ENCODE measurements at regions of chr9 and their contacts with region 1.

Region 1: DNA sequence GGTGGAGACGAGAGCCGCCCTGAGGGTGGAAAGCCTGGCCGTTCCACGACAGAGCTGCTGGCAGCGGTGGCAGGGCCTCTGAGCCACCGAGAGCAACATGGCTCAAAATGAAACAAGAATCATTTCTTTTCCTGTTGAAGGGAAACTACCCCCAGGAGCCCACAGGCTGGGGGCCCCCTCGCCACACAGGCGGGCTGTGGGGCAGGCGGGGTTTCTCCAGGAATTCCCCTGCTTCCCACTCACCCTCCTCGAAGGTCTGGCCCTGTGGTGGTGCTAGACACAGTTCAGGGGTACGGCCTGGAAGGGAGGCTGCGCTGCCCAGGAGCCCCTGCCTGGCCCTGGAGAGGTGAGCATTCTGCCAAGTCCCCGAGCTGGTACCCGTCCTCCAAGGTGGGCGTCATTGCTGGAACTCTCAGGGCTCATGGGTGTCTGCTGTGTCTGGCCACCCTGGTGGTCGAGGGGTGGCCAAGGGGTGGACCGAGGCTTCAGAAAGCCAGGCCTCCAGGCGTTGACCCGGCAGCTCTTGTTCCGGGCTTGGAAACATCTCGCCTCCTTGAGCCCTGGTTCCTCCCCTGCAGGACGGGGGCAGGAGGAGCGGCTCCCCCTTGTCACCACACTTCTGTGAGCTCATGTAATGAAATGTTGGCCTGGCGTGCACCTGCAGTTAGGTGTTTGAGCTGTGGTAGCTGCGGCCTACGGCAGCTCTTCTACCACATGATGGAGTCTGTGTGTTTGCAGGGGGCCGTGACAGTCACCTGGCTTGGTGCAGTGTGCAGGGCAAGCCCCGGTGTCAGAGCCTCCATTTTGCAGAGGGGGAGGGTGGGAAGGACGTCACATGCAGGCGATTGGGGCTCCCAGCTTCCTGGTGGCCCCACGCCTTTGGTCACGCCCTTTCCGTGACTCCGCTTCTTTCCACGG is 65.3 kb downstream of the RXRA start:
- DNase-seq: peak; percentile 87
- H3K4me3 Mint-ChIP-seq: peak overlapping the region; percentile 56
- H3K27ac Mint-ChIP-seq: peak overlapping the region; percentile 68
- H3K4me1 Mint-ChIP-seq: peaks cover 47% of the 10 kb centered on the region
- H3K27me3 Mint-ChIP-seq: no peaks in the 10 kb centered on the region

Region 2: GRCh38 chr9:133910855-133911514 is 480.6 kb before region 1 on chr9:
- CTCF ChIA-PET with region 1: no interaction called
- intact Hi-C with region 1: no loop called
- DNase-seq: no peak
- H3K4me3 Mint-ChIP-seq: no peak overlapping the region
- H3K27ac Mint-ChIP-seq: no peak overlapping the region
- H3K4me1 Mint-ChIP-seq: peaks cover 2% of the 10 kb centered on the region
- H3K27me3 Mint-ChIP-seq: peaks cover 6% of the 10 kb centered on the region

Region 3: DNA sequence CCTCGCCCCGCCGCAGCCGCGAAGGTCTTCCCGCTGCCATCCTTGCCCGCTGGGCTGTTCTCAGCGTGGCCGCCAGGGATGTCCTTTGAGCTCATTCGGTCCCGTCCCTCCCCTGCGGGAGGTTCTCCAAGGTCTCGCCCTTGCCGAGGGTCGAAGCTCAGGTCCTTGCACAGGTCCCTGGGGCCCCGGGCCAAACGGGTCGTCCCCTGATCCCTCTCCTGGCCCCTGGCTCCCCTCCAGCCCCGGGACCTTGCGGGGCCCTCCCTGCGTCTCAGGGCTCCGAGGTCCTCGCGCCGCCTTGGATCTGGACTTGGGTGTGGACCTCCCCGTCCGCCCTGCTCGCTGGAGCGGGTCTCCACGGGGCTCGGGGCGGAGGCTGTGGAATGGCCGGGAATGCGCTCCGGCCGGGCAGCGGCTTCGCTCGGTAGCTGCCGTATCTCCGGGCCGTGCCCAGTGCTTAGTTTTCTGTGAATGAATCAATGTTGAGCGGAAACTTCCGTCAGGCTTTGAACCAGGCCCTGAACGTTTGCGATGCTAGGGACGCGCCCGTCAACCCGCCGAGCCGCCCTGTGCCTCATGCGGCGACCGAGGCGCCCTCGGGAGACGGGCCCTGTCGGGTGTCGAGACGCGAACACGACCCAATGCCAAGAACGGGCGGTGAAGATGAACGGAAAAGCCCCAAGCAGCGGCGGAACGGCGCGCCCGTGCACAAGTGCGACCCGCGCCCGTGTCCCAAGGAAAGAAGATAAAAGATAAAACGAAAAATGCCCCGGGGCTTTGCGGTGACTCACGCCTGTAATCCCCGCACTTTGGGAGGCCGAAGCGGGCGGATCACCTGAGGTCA is 228.0 kb before region 1 on chr9:
- CTCF ChIA-PET with region 1: interaction called, 3 read pairs
- intact Hi-C with region 1: loop called (anchors 2 kb)
- DNase-seq: peak; percentile 78
- H3K4me3 Mint-ChIP-seq: peak overlapping the region; percentile 27
- H3K27ac Mint-ChIP-seq: no peak overlapping the region
- H3K4me1 Mint-ChIP-seq: peaks cover 14% of the 10 kb centered on the region
- H3K27me3 Mint-ChIP-seq: no peaks in the 10 kb centered on the region

Region 4: GRCh38 chr9:134301387-134302129 is 90.0 kb before region 1 on chr9:
- CTCF ChIA-PET with region 1: no interaction called
- intact Hi-C with region 1: loop called (anchors 1 kb)
- DNase-seq: peak; percentile 69
- H3K4me3 Mint-ChIP-seq: no peak overlapping the region
- H3K27ac Mint-ChIP-seq: no peak overlapping the region
- H3K4me1 Mint-ChIP-seq: peaks cover 7% of the 10 kb centered on the region
- H3K27me3 Mint-ChIP-seq: no peaks in the 10 kb centered on the region

Region 5: DNA sequence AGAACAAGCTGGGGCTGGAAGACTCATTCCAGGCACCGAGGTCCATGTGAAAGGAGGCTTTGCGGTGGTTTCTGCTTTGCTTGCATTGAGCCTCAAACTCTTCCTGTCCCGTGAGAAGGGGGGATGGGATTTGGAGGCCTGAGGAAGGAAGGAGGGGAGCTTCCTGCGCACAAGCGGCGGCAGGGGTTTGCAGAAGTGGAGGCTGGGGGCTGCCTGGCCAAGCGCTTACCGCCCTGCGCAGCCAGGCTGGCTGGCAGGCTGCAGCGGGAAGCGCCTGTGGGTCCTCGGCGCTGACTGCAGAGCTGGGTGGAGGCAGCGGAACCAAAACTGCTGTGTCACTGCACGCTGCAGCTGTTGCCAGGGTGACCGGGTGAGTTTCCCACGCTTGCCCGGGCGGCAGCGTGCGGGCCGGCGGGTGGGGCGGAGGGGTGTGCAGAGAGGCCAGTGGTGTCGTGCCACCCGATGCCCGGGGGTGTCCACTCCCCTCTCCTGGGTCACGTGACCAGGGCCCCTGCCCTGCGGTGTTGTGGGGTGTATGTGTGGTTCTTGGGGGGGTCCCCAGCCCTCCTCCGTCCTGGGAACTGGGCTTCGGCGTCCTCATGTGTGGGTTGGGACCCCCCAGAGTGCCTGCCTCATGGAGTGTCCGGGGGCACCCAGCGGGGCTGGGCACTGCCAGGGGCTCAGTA is 15.7 kb after region 1 on chr9:
- CTCF ChIA-PET with region 1: interaction called, 4 read pairs
- intact Hi-C with region 1: loop called (anchors 1 kb)
- DNase-seq: peak; percentile 88
- H3K4me3 Mint-ChIP-seq: peak overlapping the region; percentile 10
- H3K27ac Mint-ChIP-seq: no peak overlapping the region
- H3K4me1 Mint-ChIP-seq: peaks cover 36% of the 10 kb centered on the region
- H3K27me3 Mint-ChIP-seq: peaks cover 6% of the 10 kb centered on the region

Region 6: DNA sequence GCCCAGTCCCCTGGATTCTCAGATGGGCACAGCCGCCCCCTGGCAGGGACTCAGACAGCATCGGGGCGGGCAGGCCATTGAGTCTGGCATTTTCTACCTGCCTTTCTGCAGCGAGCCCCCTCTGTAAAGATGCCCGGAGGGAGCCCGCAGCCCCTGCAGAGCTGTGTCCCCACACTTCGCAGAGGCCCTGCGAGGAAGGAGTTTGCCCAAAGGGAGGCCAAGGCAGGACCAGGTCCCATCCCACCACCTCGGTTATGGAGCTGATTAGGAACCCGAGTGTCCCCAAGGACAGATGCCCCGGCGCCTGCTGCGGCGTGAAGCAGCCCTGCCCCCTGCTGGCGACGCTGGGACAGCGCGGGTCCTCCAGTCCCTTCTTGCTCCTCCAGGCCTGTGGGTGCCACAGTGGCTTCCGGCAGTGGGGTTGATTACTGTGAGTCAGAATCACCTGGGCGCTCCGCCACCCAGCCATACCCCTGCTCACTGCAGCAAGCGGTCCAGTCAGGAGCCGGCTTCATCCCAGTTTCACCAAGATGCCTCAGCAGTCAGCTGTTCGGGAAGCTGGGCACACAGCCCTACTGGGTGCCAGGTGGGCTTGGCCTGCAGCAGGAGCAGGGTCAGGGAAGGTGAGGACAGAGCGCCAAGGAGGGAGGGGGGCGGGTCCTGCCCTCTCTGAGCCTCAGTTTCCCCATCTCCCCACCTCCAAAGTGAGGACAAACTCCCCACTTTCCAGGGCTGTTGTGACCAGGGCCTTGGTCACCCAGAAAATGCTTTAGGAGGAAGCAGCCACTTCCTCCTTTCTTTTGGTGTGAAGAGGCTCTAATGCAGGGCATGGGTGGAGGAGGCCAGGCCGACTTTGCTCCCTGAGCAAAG is 51.8 kb after region 1 on chr9:
- CTCF ChIA-PET with region 1: interaction called, 7 read pairs
- intact Hi-C with region 1: loop called (anchors 2 kb)
- DNase-seq: peak; percentile 92
- H3K4me3 Mint-ChIP-seq: no peak overlapping the region
- H3K27ac Mint-ChIP-seq: no peak overlapping the region
- H3K4me1 Mint-ChIP-seq: peaks cover 12% of the 10 kb centered on the region
- H3K27me3 Mint-ChIP-seq: peaks cover 10% of the 10 kb centered on the region

Region 7: GRCh38 chr9:134475011-134475790 is 83.6 kb after region 1 on chr9:
- CTCF ChIA-PET with region 1: no interaction called
- intact Hi-C with region 1: loop called (anchors 1 kb)
- DNase-seq: peak; percentile 75
- H3K4me3 Mint-ChIP-seq: peak overlapping the region; percentile 36
- H3K27ac Mint-ChIP-seq: peak overlapping the region; percentile 79
- H3K4me1 Mint-ChIP-seq: peaks cover 10% of the 10 kb centered on the region
- H3K27me3 Mint-ChIP-seq: no peaks in the 10 kb centered on the region